GM12878 (cell line): ENCODE measurements at regions of chr19 and their contacts with region 1.

Region 1: DNA sequence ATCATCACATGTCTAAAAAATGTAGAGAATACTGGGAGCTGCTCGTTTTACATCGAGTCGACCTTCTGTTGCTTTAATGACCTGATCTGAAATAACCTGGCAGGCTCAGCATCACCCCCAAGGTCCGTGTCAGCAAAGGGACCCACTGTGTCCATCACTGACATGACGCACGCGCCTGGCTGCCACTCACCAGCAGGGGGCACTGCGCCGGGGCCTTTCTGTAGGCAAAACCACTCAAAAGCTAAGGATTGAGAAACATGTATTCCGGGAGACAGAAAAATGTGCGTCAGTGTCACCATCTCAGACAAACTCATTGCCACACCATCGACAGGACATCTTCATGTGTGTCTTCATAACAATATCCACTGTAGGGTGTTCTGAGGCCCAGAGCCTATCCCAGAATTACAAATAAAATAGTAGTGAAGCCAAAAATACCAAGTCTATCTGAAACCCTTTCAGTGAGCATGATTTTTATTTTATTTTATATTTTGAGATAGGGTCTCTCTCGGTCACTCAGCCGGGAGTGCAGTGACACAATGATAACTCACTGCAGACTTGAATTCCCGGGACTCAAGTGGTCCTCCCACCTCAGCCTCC is 130.3 kb upstream of the LSM14A start:
- DNase-seq: no peak
- ATAC-seq: peak; percentile 78
- H3K4me3 ChIP-seq: no peak overlapping the region
- H3K27ac ChIP-seq: no peak overlapping the region
- H3K4me1 ChIP-seq: no peaks in the 10 kb centered on the region
- H3K27me3 ChIP-seq: no peaks in the 10 kb centered on the region
- CTCF ChIP-seq: peak; percentile 70 to 90 (median 89)
- EP300 ChIP-seq: no peak
- POLR2A ChIP-seq: no peak
- RAD21 ChIP-seq: peak; percentile 42

Region 2: GRCh38 chr19:33562636-33563035 is 479.4 kb before region 1 on chr19:
- CTCF ChIA-PET with region 1: no interaction called
- POLR2A ChIA-PET with region 1: no interaction called
- RAD21 ChIA-PET with region 1: no interaction called
- SMC1A ChIA-PET with region 1: no interaction called
- in situ Hi-C with region 1: no loop called
- intact Hi-C with region 1: no loop called
- DNase-seq: no peak
- ATAC-seq: no peak
- H3K4me3 ChIP-seq: no peak overlapping the region
- H3K27ac ChIP-seq: no peak overlapping the region
- H3K4me1 ChIP-seq: no peaks in the 10 kb centered on the region
- H3K27me3 ChIP-seq: no peaks in the 10 kb centered on the region
- CTCF ChIP-seq: no peak
- EP300 ChIP-seq: no peak
- POLR2A ChIP-seq: no peak
- RAD21 ChIP-seq: no peak

Region 3: GRCh38 chr19:33953592-33953991 is 88.4 kb before region 1 on chr19:
- CTCF ChIA-PET with region 1: no interaction called
- POLR2A ChIA-PET with region 1: no interaction called
- RAD21 ChIA-PET with region 1: no interaction called
- SMC1A ChIA-PET with region 1: no interaction called
- in situ Hi-C with region 1: no loop called
- intact Hi-C with region 1: no loop called
- DNase-seq: no peak
- ATAC-seq: no peak
- H3K4me3 ChIP-seq: no peak overlapping the region
- H3K27ac ChIP-seq: no peak overlapping the region
- H3K4me1 ChIP-seq: no peaks in the 10 kb centered on the region
- H3K27me3 ChIP-seq: no peaks in the 10 kb centered on the region; a peak in 2 of 4 replicates
- CTCF ChIP-seq: no peak
- EP300 ChIP-seq: no peak
- POLR2A ChIP-seq: no peak
- RAD21 ChIP-seq: no peak

Region 4: GRCh38 chr19:34096020-34096915 is 54.2 kb after region 1 on chr19:
- CTCF ChIA-PET with region 1: interaction called, 15 read pairs
- POLR2A ChIA-PET with region 1: no interaction called
- RAD21 ChIA-PET with region 1: interaction called, 7 read pairs
- SMC1A ChIA-PET with region 1: interaction called, 4 read pairs
- in situ Hi-C with region 1: no loop called
- intact Hi-C with region 1: loop called (anchors 2 kb)
- DNase-seq: no peak
- ATAC-seq: peak; percentile 56; the same call in 2 of the 3 replicates
- H3K4me3 ChIP-seq: no peak overlapping the region
- H3K27ac ChIP-seq: no peak overlapping the region
- H3K4me1 ChIP-seq: no peaks in the 10 kb centered on the region
- H3K27me3 ChIP-seq: no peaks in the 10 kb centered on the region
- CTCF ChIP-seq: peak; percentile 50 to 58 (median 57)
- EP300 ChIP-seq: no peak
- POLR2A ChIP-seq: no peak
- RAD21 ChIP-seq: peak; percentile 58

Region 5: DNA sequence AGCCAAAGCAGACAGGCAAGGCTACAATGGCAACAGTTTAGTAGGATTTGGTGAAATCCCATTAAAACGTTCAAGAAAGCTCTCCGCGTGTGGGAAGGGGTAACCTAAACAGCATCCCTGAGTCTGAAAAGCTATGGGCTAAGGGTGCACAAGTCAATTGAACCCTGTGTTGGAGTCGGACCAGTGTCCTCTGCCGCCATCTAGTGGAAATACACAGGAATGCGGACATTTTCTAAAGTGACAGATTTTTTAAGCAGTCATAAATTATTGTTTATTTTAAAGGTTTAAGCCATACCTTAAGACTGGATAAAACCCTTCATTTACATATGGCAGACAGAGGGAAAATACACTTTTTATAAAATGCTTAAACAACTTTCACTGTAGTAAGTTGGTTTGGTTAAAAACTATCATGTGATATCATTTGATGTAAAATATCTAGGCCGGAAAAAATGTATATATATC is 103.7 kb after region 1 on chr19:
- CTCF ChIA-PET with region 1: interaction called, 23 read pairs
- POLR2A ChIA-PET with region 1: no interaction called
- RAD21 ChIA-PET with region 1: no interaction called
- SMC1A ChIA-PET with region 1: interaction called, 7 read pairs
- in situ Hi-C with region 1: no loop called
- intact Hi-C with region 1: loop called (anchors 1 kb)
- DNase-seq: no peak
- ATAC-seq: peak; percentile 82
- H3K4me3 ChIP-seq: no peak overlapping the region
- H3K27ac ChIP-seq: no peak overlapping the region
- H3K4me1 ChIP-seq: no peaks in the 10 kb centered on the region
- H3K27me3 ChIP-seq: no peaks in the 10 kb centered on the region; a peak in 1 of 4 replicates
- CTCF ChIP-seq: peak; percentile 62 to 90 (median 83)
- EP300 ChIP-seq: no peak
- POLR2A ChIP-seq: no peak
- RAD21 ChIP-seq: peak; percentile 85

Region 6: GRCh38 chr19:34184880-34185491 is 143.0 kb after region 1 on chr19:
- CTCF ChIA-PET with region 1: no interaction called
- POLR2A ChIA-PET with region 1: no interaction called
- RAD21 ChIA-PET with region 1: no interaction called
- SMC1A ChIA-PET with region 1: no interaction called
- in situ Hi-C with region 1: no loop called
- intact Hi-C with region 1: no loop called
- DNase-seq: no peak
- ATAC-seq: peak; percentile 56
- H3K4me3 ChIP-seq: no peak overlapping the region
- H3K27ac ChIP-seq: 0 out of 2 replicates have a peak overlapping the region, but pooled peaks have one; percentile 0
- H3K4me1 ChIP-seq: no peaks in the 10 kb centered on the region; the same call in 1 of the 2 replicates
- H3K27me3 ChIP-seq: no peaks in the 10 kb centered on the region
- CTCF ChIP-seq: no peak
- EP300 ChIP-seq: no peak
- POLR2A ChIP-seq: no peak
- RAD21 ChIP-seq: no peak